Heart right ventricle (tissue), 16 donors: ENCODE measurements at regions of chr1 and their contacts with region 1.

Region 1: DNA sequence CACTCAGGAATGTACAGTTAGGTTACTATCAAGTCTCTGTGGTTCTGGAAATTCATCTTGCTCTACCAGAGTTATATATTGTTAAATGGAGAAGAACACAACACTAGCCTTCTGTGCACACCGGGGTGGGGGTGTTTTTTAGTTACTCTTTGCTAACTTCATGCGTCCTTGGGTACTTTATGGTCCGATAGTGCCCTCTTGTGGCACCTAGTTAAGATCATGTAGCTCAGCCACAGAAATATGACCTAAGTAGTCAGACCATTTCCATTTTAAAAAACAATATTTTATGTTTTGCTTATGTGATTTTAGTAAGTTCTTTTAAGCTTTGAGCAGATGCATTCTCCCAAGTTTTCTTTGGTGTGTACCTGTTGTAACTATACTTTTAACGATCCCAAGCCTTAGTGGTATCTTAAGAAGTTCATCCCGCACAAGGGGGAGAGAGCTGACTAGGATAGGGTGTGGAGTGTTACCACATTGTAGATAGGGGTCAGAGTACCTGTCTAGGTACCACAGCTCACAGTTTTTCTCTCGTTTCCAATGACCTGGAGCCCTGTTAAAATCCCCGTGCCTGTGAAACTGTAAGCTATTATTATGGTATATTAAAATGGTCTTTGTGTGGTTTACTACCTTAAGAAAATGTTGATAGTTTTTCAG is 20.6 kb upstream of the SH3D21 start:
- DNase-seq: peak in 1 of 2 donors; percentile 83
- ATAC-seq: peak; percentile 63 to 87 (median 84)
- H3K4me3 ChIP-seq: no peak overlapping the region
- H3K27ac ChIP-seq: peak overlapping the region in 8 of 10 donors; percentile 8 to 82 (median 68)
- H3K4me1 ChIP-seq: peaks cover 3 to 85% (median 54%) of the 10 kb centered on the region in 9 donors
- H3K27me3 ChIP-seq: no peaks in the 10 kb centered on the region
- CTCF ChIP-seq: peak; percentile 55 to 89 (median 78)

Region 2: GRCh38 chr1:35864813-35865212 is 420.8 kb before region 1 on chr1:
- intact Hi-C with region 1: no loop called
- DNase-seq: no peak
- ATAC-seq: no peak
- H3K4me3 ChIP-seq: no peak overlapping the region
- H3K27ac ChIP-seq: peak overlapping the region in 1 of 10 donors; percentile 76
- H3K4me1 ChIP-seq: peaks cover 0 to 54% (median 9%) of the 10 kb centered on the region in 9 donors
- H3K27me3 ChIP-seq: no peaks in the 10 kb centered on the region
- CTCF ChIP-seq: no peak

Region 3: DNA sequence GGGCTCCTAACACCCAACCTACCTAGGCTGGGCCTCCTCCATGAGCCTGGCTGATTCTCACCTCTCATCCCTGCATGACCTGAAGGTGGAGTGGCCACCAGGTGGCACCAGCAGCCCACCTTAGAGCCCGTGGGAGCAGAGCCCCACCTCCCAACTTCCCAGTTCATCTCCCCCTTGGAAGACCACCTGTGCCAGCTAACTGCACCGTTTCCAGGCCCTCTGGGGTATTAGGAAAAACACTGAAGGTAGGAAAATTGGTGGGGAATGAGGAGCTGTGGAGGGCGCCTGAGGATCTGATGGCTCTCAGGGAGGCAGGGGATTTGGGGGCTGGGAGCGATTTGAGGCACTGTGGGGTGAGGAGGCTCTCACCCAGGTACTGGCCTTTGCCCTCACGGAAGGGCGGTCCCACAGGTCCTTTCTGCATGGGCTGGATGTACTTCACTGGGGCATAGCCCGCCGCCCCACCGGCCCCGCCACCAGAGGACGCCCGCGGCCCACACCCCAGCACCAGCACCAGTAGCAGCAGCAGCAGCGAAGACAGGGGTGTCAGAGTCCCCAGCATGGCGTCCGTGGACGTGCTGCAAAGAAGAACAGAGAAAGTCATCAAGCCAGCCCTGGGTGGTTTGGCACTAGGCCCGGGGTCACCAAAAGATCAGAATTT is 185.8 kb before region 1 on chr1:
- intact Hi-C with region 1: loop called in 8 of 10 experiments (anchors 2 to 10 kb)
- DNase-seq: peak; percentile 75 to 83
- ATAC-seq: peak; percentile 81 to 91 (median 86)
- H3K4me3 ChIP-seq: peak overlapping the region in 4 of 10 donors; percentile 5 to 28 (median 11)
- H3K27ac ChIP-seq: no peak overlapping the region
- H3K4me1 ChIP-seq: peaks cover 0 to 29% (median 19%) of the 10 kb centered on the region in 9 donors
- H3K27me3 ChIP-seq: no peaks in the 10 kb centered on the region
- CTCF ChIP-seq: peak; percentile 68 to 89 (median 80)

Region 4: DNA sequence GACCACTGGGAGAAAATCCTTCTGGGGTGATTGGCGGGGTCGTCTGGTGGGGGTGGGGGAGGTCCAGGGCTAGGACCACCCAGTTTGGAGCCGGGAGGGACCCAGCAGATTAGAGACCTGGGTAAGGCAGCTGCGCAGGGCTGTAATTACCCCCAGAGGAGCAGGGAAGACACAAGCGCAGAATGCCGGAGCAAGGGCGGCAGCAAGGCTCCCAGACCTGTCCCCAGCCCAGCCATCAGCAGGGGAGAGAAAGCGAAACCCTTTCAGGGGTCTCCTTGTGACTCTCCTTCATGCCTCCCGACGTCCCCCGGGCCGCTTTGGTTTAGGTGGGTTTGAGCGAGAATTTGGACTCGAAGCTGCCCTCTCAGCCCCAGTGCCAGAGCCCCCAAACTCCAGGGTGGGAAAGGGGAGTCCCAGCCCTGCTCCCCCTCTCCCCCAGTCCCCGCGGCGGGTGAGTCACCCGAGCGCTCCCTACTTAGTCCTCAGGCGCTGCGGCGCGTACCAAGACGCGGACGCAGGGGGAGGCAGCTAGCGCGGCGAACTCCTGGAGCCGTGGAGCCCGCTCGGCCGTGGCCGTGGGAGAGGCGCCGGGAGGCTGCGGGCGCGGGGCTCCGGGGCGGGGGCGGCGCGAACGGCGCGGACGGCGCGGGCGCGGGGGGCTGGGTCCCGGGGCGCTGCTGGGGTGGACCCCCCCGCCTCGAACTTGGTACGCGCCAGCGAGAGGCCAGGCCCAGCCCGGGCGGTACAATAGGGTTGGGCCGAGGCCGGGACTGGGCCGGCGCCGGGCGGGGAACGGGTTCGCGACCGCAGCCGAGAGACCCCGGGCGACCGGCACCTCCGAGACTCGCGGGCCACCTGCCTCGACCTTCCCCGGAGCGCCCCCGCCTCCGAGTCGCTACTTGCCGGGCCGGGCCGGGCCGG is 129.9 kb before region 1 on chr1 and contains the start of gene MAP7D1:
- intact Hi-C with region 1: loop called in 3 of 10 experiments (anchors 1 to 5 kb)
- DNase-seq: peak; percentile 89 to 90
- ATAC-seq: peak; percentile 63 to 85 (median 72)
- H3K4me3 ChIP-seq: peak within 1 kb of the TSS; percentile 68 to 100 (median 99)
- H3K27ac ChIP-seq: peak within 1 kb of the TSS; percentile 98 to 100 (median 100)
- H3K4me1 ChIP-seq: peaks cover 39 to 79% (median 72%) of the 10 kb centered on the region in 9 donors
- H3K27me3 ChIP-seq: no peaks in the 10 kb centered on the region
- CTCF ChIP-seq: no peak
- total RNA-seq, gene MAP7D1: 277 to 364 (median 325) TPM

Region 5: DNA sequence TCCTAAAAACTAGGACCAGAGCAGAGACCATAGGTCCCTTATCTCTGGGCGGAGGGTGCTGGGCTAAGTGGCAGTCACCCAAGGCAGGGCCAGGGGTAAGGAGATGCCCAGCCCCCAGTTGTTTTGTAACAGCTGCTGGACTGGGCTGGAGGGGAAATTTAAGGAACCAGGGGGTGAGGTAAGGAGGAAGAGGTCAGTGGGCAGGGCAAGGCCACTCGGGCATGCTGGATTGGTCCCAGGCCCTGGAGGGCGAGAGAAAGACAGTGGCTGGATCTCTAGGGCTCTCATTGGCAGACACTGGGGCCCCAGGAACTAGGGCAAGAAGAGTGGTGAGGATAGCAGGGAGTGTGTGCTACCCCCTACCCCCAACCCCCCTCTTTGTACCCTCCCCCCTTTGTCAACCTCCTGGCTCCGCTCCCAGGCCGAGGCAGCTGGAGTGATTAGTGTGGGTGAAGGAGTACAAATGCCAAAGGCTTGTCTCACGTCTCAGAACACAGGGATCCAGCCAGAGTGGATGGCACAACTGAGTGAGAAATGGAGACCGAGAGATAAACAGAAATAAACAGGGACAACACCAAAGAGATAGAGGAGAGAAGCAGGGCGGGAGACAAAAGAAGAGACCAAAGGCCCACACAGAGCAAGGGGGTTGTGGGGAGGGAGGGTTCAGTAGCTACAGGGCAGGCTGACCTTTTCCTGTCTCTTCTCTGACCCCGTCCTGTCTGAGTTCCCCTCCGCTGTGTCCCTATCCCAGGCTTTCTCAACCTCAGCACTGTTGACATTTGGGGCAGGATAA is 81.8 kb before region 1 on chr1:
- intact Hi-C with region 1: loop called in 2 of 10 experiments (anchors 5 to 10 kb)
- DNase-seq: peak; percentile 64 to 67
- ATAC-seq: peak; percentile 71 to 91 (median 80)
- H3K4me3 ChIP-seq: no peak overlapping the region
- H3K27ac ChIP-seq: peak overlapping the region; percentile 71 to 96 (median 88)
- H3K4me1 ChIP-seq: peaks cover 8 to 60% (median 33%) of the 10 kb centered on the region in 9 donors
- H3K27me3 ChIP-seq: no peaks in the 10 kb centered on the region
- CTCF ChIP-seq: no peak

Region 6: GRCh38 chr1:36231191-36231590 is 54.4 kb before region 1 on chr1:
- intact Hi-C with region 1: loop called in 5 of 10 experiments (anchors 5 to 10 kb)
- DNase-seq: no peak
- ATAC-seq: peak in 2 of 8 donors; percentile 48 to 55
- H3K4me3 ChIP-seq: peak overlapping the region in 1 of 10 donors; percentile 9
- H3K27ac ChIP-seq: peak overlapping the region in 5 of 10 donors; percentile 7 to 57 (median 29)
- H3K4me1 ChIP-seq: peaks cover 14 to 95% (median 75%) of the 10 kb centered on the region in 9 donors
- H3K27me3 ChIP-seq: no peaks in the 10 kb centered on the region
- CTCF ChIP-seq: no peak

Region 7: DNA sequence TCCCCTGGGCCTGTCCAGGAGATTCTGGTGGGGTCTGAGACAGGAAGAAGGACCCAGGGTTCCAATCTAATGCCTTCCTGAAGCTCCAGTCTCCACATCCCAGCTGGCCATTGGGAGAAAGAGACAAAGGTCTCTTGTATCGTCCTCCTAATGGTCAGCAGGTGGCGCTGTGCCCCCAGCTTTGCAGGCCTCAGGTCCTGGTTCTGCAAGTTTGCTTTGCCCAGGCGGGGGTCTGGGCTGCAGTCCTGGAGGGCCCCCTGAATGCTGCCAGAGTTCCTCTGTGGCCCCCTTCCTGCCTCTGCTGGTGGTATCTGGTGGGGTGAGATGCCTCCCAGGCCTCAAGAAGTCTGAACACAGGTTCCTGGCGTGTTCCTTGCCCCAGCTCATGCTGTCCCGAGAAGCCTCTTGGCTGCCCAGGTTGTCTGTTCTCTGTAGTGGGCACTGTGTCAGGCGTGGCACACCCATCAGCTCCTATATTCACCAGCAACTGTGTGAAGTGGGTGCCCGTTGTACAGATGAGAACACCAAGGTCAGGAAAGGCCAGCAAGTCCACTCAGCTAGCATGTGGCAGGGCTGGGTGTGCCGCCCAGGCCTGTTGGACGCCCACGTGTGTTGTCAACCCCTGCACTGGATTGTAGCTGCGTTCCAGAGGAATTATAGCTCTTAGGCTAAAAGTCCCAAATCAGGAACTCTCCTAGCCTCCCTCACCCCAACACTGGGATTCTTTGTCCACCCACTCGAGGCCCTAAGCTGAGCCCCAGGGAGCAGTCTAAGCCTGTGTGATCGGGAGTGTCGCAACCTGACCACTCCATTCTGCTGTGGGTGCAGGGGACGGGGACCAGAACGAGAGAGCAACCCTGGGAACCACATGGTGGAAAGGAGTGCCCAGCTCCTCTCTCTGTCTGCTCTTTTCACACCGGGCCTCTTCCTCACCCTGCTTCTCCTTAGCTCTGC is 231.1 kb after region 1 on chr1:
- intact Hi-C with region 1: no loop called
- DNase-seq: no peak
- ATAC-seq: peak in 5 of 8 donors; percentile 39 to 77 (median 55)
- H3K4me3 ChIP-seq: no peak overlapping the region
- H3K27ac ChIP-seq: peak overlapping the region in 1 of 10 donors; percentile 8
- H3K4me1 ChIP-seq: no peaks in the 10 kb centered on the region
- H3K27me3 ChIP-seq: peaks cover 0 to 39% (median 8%) of the 10 kb centered on the region in 7 donors
- CTCF ChIP-seq: peak; percentile 48 to 88 (median 67)